Adrenal gland (tissue), 19 donors: ENCODE measurements at regions of chr6 and their contacts with region 1.

Region 1: DNA sequence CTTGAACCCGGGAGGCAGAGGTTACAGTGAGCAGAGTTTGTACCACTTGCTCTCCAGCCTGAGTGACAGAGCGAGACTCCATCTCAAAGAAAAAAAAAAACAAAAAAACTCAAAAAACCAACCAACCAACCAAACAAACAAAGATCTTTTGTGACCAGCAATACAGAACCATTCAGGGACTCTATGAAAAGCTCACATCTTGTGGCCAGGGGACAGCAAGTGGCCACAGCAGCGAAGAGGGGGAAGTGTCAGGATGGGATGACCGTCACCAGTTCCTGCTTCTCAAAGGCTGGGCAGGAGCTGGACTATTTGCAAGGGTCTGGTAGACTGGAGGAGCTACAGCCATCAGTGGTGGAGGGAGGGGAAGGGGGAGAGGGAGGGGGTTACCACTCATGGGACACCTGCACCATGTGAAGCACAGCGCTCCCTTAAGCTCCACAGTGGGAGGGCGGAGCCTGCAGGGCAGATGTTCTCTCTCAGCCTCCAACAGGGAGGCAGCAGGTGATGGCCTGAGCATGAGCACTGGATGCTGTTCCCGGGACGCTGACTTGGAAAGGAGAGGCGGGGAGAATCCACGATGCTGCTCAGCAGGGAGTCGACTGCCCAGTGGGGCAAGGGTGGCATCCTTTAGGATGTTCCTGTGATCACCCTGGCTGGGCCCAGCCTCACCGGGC is 19.7 kb upstream of the ULBP3 start:
- DNase-seq: peak in 1 of 7 donors; percentile 31
- H3K4me3 ChIP-seq: no peak overlapping the region
- H3K27ac ChIP-seq: no peak overlapping the region
- H3K4me1 ChIP-seq: no peaks in the 10 kb centered on the region
- H3K27me3 ChIP-seq: peaks cover 7% of the 10 kb centered on the region
- CTCF ChIP-seq: no peak
- POLR2A ChIP-seq: no peak

Region 2: GRCh38 chr6:150392452-150393220 is 304.0 kb after region 1 on chr6:
- intact Hi-C with region 1: loop called in 1 of 2 experiments (anchors 5 kb)
- DNase-seq: no peak
- H3K4me3 ChIP-seq: no peak overlapping the region
- H3K27ac ChIP-seq: no peak overlapping the region
- H3K4me1 ChIP-seq: no peaks in the 10 kb centered on the region
- H3K27me3 ChIP-seq: peaks cover 6% of the 10 kb centered on the region
- CTCF ChIP-seq: no peak
- POLR2A ChIP-seq: no peak